Dendritic cell treated with granulocyte-macrophage colony-stimulating factor and Interleukin-4, amounts not matched to agents 40 ng/mL and 50 ng/mL, for 4 days (primary cell): ENCODE measurements at regions of chr20 and their contacts with region 1.

Region 1: GRCh38 chr20:40323361-40323794 is 365.7 kb downstream of the MAFB start:
- H3K4me3 Mint-ChIP-seq: no peak overlapping the region
- H3K27ac Mint-ChIP-seq: peak overlapping the region; percentile 85
- H3K4me1 Mint-ChIP-seq: peaks cover 64% of the 10 kb centered on the region
- H3K27me3 Mint-ChIP-seq: no peaks in the 10 kb centered on the region

Region 2: GRCh38 chr20:39588148-39588757 is 735.1 kb before region 1 on chr20:
- intact Hi-C with region 1: no loop called
- H3K4me3 Mint-ChIP-seq: no peak overlapping the region
- H3K27ac Mint-ChIP-seq: no peak overlapping the region
- H3K4me1 Mint-ChIP-seq: no peaks in the 10 kb centered on the region
- H3K27me3 Mint-ChIP-seq: no peaks in the 10 kb centered on the region

Region 3: GRCh38 chr20:40056166-40056565 is 267.2 kb before region 1 on chr20:
- intact Hi-C with region 1: no loop called
- H3K4me3 Mint-ChIP-seq: no peak overlapping the region
- H3K27ac Mint-ChIP-seq: no peak overlapping the region
- H3K4me1 Mint-ChIP-seq: no peaks in the 10 kb centered on the region
- H3K27me3 Mint-ChIP-seq: peaks cover 2% of the 10 kb centered on the region

Region 4: DNA sequence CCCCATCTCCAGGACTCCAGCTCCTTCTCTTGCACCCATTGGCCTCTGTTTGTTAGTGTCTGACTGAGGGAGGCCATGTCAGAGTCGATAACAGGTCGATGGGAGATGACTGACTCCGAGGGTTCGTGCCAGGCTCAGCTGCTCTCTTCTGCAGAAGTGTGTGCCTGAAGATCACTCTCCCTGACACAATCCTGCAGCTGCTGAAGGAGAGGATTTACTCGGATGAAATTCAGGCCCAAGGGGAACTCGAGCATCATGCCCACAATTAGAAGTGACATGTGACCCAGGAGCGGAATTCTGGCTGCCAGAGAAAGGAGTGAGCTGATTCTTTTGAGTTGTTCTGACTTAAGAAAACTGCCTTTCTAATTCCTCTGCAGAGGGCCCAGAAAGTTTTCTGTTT is 47.4 kb after region 1 on chr20:
- intact Hi-C with region 1: loop called (anchors 10 kb)
- H3K4me3 Mint-ChIP-seq: no peak overlapping the region
- H3K27ac Mint-ChIP-seq: no peak overlapping the region
- H3K4me1 Mint-ChIP-seq: peaks cover 2% of the 10 kb centered on the region
- H3K27me3 Mint-ChIP-seq: peaks cover 13% of the 10 kb centered on the region